ENCODE measurements at regions of chr12 and their contacts with region 1.

Region 1: DNA sequence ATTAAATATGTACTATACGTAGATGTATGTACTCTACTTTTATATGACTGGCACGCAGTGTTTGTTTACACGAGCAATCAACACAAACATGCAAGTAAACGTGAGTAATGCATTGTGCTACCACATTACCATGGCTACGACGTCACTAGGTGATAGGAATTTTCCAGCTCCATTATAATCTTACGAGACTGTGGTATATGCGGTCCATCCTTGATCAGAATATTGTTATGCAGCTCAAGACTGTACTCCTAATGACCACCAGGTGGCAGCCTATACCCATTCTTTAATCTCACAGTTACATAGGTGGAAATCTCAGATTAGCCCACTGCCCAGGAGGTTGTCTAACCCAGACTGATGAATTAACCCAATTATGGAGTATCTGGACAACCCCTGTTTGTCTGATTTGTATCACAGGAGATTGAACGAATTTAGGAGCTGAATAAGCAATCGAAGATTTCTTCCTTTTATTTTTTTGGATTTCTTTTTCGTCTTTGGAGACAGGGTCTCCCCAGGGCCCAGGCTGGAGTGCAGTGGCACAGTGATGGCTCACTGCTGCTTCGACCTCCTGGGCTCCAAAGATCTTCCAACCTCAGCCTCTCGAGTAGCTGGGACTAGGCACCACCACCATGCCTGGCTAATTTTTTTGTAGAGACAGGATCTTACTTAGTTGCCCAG is 8.7 kb upstream of the TESPA1 start:
- DNase-seq: peak; percentile 60
- H3K4me3 ChIP-seq: peak overlapping the region in 1 of 2 experiments; percentile 0; a peak in 1 of 4 replicates
- H3K27ac ChIP-seq: no peak overlapping the region
- H3K4me1 ChIP-seq: no peaks in the 10 kb centered on the region
- H3K27me3 ChIP-seq: peaks cover 16% of the 10 kb centered on the region; the same call in 1 of the 2 replicates
- CTCF ChIP-seq: peak; percentile 90
- EP300 ChIP-seq: no peak
- RAD21 ChIP-seq: peak; percentile 85

Region 2: DNA sequence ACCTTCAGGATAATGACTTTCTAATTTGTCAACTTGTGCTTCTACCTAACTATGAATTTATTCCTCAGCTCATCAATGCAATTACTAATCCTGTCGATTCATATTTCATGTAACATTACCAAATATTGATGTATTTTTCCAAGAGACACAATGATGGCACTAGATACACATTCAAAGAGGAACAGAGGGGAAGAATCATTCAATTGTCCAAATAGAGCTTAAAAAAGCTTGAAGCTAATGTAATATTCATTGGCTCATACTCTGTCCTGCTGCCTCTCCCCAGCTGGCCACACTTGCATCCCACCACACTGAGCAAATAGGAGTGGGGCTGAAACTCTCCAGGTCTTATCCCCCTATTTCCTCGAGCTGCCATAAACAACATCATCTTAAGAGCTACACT is 18.0 kb before region 1 on chr12:
- CTCF ChIA-PET with region 1: interaction called, 11 read pairs
- POLR2A ChIA-PET with region 1: no interaction called
- DNase-seq: no peak
- H3K4me3 ChIP-seq: no peak overlapping the region
- H3K27ac ChIP-seq: no peak overlapping the region
- H3K4me1 ChIP-seq: no peaks in the 10 kb centered on the region
- H3K27me3 ChIP-seq: peaks cover 15% of the 10 kb centered on the region; the same call in 1 of the 2 replicates
- CTCF ChIP-seq: no peak
- EP300 ChIP-seq: no peak
- RAD21 ChIP-seq: no peak

Region 3: DNA sequence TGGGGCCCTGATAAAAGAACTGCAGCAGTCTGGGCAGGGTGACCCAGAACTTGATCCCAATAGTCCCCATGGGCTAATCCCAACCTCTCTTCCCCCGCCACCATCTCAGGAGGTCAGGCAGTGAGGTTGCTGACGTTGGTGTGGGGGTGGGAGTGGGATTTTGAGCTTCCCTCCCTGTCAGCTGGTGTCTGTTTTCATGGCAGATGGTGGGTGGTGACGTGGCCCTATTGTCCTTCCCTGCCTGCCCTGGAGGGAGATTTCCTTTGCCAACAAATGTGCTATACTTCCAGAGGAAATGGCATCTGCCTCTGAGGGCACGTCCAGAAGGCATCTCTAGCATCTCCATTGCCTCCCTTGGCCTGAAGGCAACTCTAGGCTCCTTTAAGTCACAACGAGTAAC is 64.2 kb after region 1 on chr12:
- CTCF ChIA-PET with region 1: interaction called, 12 read pairs
- POLR2A ChIA-PET with region 1: no interaction called
- DNase-seq: no peak
- H3K4me3 ChIP-seq: no peak overlapping the region
- H3K27ac ChIP-seq: no peak overlapping the region
- H3K4me1 ChIP-seq: no peaks in the 10 kb centered on the region
- H3K27me3 ChIP-seq: no peaks in the 10 kb centered on the region; the same call in 1 of the 2 replicates
- CTCF ChIP-seq: no peak
- EP300 ChIP-seq: no peak
- RAD21 ChIP-seq: no peak

Region 4: GRCh38 chr12:55073043-55074022 is 80.0 kb after region 1 on chr12:
- CTCF ChIA-PET with region 1: interaction called, 62 read pairs
- POLR2A ChIA-PET with region 1: no interaction called
- DNase-seq: peak; percentile 52
- H3K4me3 ChIP-seq: no peak overlapping the region; a peak in 1 of 4 replicates
- H3K27ac ChIP-seq: no peak overlapping the region
- H3K4me1 ChIP-seq: no peaks in the 10 kb centered on the region
- H3K27me3 ChIP-seq: no peaks in the 10 kb centered on the region
- CTCF ChIP-seq: peak; percentile 94
- EP300 ChIP-seq: no peak
- RAD21 ChIP-seq: peak; percentile 83

Region 5: GRCh38 chr12:55142669-55143565 is 149.6 kb after region 1 on chr12:
- CTCF ChIA-PET with region 1: interaction called, 15 read pairs
- POLR2A ChIA-PET with region 1: no interaction called
- DNase-seq: peak; percentile 18
- H3K4me3 ChIP-seq: peak overlapping the region in 1 of 2 experiments; percentile 29; a peak in 1 of 4 replicates
- H3K27ac ChIP-seq: no peak overlapping the region
- H3K4me1 ChIP-seq: no peaks in the 10 kb centered on the region
- H3K27me3 ChIP-seq: no peaks in the 10 kb centered on the region; the same call in 1 of the 2 replicates
- CTCF ChIP-seq: peak; percentile 83
- EP300 ChIP-seq: no peak
- RAD21 ChIP-seq: peak; percentile 51